Posterior cingulate gyrus (tissue), 11 donors: ENCODE measurements at regions of chr1 and their contacts with region 1.

Region 1: GRCh38 chr1:212414328-212415106 is at the start of gene PACC1:
- DNase-seq: peak; percentile 83 to 98 (median 88)

Region 2: GRCh38 chr1:212432706-212433576 is 18.4 kb after region 1 on chr1 and contains the start of gene NENF:
- intact Hi-C with region 1: loop called (anchors 2 kb)
- DNase-seq: peak; percentile 65 to 98 (median 78)